ENCODE measurements at regions of chr1 and their contacts with region 1.

Region 1: GRCh38 chr1:153566440-153567379 is 1.1 kb upstream of the S100A2 start:
- DNase-seq: peak; percentile 96
- H3K4me3 Mint-ChIP-seq: peak overlapping the region; percentile 32
- H3K27ac Mint-ChIP-seq: peak overlapping the region; percentile 86
- H3K4me1 Mint-ChIP-seq: peaks cover 44% of the 10 kb centered on the region
- H3K27me3 Mint-ChIP-seq: no peaks in the 10 kb centered on the region

Region 2: GRCh38 chr1:153545067-153546055 is 21.3 kb before region 1 on chr1 and contains the start of gene S100A4:
- CTCF ChIA-PET with region 1: interaction called, 23 read pairs
- intact Hi-C with region 1: loop called (anchors 1 kb)
- DNase-seq: peak; percentile 98
- H3K4me3 Mint-ChIP-seq: peak within 1 kb of the TSS; percentile 71
- H3K27ac Mint-ChIP-seq: peak within 1 kb of the TSS; percentile 93
- H3K4me1 Mint-ChIP-seq: peaks cover 74% of the 10 kb centered on the region
- H3K27me3 Mint-ChIP-seq: no peaks in the 10 kb centered on the region
- total RNA-seq, gene S100A4: 36.5 to 37.9 TPM

Measured in activated naive CD4-positive, alpha-beta T cell treated with anti-CD3 and anti-CD28 coated beads for 36 hours (primary cell).